Panc1 (cell line): ENCODE measurements at regions of chr3 and their contacts with region 1.

Region 1: DNA sequence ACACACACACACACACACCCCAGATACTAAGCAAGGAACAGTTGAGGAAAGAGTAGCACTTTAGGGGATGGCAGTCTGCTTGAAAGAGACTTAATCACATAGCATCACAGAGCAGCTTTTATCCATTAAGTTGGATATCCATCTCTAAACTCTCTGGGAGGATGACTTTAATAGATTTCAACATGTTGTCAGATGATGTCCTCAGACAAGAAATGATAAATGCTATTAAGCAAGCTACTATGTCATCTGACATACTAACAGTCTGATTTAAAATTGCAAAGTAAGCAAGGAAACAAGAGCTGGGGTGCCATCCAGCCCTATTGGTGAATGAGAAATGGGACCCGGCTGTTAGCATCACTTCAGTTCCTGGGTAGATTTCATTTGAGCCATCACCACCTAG is 136.9 kb downstream of the PLCL2 start:
- DNase-seq: no peak
- ATAC-seq: no peak
- H3K4me3 ChIP-seq: no peak overlapping the region
- H3K27ac ChIP-seq: no peak overlapping the region
- H3K4me1 ChIP-seq: no peaks in the 10 kb centered on the region
- H3K27me3 ChIP-seq: no peaks in the 10 kb centered on the region
- CTCF ChIP-seq: no peak

Region 2: GRCh38 chr3:17874632-17875031 is 853.0 kb after region 1 on chr3:
- CTCF ChIA-PET with region 1: interaction called, 10 read pairs
- POLR2A ChIA-PET with region 1: no interaction called
- in situ Hi-C with region 1: no loop called
- intact Hi-C with region 1: no loop called
- DNase-seq: no peak
- ATAC-seq: no peak
- H3K4me3 ChIP-seq: no peak overlapping the region
- H3K27ac ChIP-seq: no peak overlapping the region
- H3K4me1 ChIP-seq: no peaks in the 10 kb centered on the region
- H3K27me3 ChIP-seq: no peaks in the 10 kb centered on the region; the same call in 1 of the 2 replicates
- CTCF ChIP-seq: no peak